Common myeloid progenitor, CD34-positive (primary cell): ENCODE measurements at regions of chr13 and their contacts with region 1.

Region 1: DNA sequence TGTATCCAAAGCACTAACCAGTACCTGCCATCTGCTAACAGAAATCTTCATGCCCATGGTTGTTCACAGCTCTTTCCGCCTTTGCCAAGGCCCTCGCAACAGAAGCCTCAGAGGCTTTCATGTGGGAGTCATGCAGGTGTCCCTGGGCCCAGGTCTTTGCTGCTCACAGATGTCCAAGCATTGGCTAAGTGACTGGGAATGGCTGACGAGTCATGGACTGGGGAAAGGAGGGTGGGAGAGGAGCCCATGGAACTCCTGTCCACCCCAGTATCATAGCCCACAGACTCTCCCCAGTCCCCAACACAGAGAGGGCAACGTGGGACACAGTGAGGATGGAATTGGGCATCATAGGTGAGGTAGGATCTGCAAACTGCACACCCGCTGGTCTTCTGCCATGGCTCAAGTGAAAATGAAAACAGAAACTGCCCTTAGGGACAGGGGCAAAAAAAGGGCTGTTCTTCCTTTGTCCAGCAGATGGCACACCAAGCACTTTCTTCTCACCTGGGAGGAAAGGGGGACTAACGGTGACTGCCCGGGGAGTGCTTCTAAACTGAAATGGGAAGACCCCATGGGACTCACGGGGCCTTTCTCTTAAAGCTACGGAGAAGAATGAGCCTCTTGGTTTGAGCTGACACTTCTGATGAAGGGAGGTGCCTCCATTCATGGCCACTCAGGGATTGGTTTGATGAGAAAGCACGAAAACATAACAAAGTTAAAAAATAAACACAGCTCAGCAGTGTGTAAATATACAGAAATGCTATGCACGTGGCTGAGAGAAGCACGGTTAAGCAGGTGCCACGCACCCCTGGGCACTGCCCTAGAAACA is 11.1 kb upstream of the DHRS12 start:
- DNase-seq: peak; percentile 72 to 89 (median 78)
- H3K4me3 ChIP-seq: peak overlapping the region in 4 of 7 experiments; percentile 2 to 63 (median 36)
- H3K27ac ChIP-seq: no peak overlapping the region
- H3K4me1 ChIP-seq: peaks cover 3 to 29% (median 25%) of the 10 kb centered on the region in 4 experiments
- H3K27me3 ChIP-seq: no peaks in the 10 kb centered on the region

Region 2: DNA sequence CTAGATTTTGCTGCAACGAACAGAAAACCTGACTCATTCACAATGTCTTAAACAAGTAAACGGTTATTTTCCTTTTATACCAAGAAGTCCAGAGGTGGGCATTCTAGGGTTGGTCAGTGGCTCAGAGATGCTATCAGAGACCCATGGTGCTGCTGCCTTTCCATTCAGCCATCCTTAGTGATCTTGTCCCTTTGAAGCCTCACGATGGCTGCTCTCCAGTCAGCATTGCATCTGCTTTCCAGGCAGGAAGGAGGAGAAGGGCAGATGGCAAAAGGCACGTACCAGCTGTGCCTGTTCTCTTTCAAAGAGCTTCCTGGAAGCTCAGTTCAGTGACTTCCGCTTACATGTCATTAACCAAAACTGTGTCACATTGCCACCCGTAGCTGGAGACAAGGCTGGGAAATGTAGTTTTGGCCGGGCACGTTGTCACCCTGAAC is 200.7 kb before region 1 on chr13:
- CTCF ChIA-PET with region 1: no interaction called
- POLR2A ChIA-PET with region 1: no interaction called
- DNase-seq: peak in 2 of 3 donors; percentile 62 to 77
- H3K4me3 ChIP-seq: peak overlapping the region in 3 of 7 experiments; percentile 33 to 49 (median 34)
- H3K27ac ChIP-seq: no peak overlapping the region
- H3K4me1 ChIP-seq: peaks cover 12 to 16% (median 14%) of the 10 kb centered on the region in 4 experiments
- H3K27me3 ChIP-seq: no peaks in the 10 kb centered on the region

Region 3: DNA sequence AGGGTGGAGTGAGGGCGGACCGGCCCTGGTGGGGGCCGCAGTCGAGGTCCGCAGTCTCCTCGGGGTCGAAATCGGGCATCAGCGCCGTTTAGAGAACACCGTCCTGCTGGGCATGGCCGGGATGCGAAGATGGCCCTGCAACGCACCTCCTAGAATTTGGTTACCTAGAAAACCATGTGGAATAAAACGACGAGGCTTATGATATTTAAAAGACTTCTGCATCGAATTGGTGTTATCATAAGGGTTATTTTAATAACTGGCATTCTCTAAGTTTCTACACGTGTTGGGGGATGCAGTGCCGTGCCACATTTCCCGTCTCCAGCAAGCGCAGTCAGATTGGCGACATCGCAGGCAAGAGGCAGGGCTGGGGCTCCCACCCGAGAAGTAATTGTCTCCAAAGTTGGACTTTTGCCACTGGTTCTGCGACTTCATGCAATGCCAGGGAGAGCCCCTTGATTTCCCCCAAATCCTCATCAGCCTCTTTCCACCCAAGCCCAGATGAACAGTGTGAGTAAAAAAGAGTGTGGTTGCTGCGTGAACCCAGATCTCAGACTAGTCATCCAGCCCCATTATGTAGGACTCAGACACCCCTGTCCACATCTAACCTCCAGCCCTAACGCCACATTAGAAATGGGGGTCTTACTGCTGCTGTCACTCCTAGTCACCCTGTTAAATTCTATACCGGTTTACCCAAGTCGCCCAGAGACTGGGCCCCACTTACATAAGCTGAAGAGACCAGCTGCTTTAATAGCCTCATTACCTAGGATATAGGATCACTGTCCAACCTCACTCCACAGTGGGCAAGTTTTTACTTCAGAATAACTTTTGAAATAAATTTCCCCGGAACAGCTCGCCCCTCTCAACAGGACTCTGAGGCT is 10.5 kb before region 1 on chr13:
- CTCF ChIA-PET with region 1: interaction called, 12 read pairs
- POLR2A ChIA-PET with region 1: no interaction called
- DNase-seq: peak in 1 of 3 donors; percentile 57
- H3K4me3 ChIP-seq: peak overlapping the region; percentile 46 to 82 (median 75)
- H3K27ac ChIP-seq: peak overlapping the region; percentile 82 to 94
- H3K4me1 ChIP-seq: peaks cover 13 to 54% (median 40%) of the 10 kb centered on the region in 4 experiments
- H3K27me3 ChIP-seq: no peaks in the 10 kb centered on the region

Region 4: GRCh38 chr13:51825165-51825592 is 10.1 kb after region 1 on chr13:
- CTCF ChIA-PET with region 1: interaction called, 58 read pairs
- POLR2A ChIA-PET with region 1: no interaction called
- DNase-seq: peak; percentile 40 to 89 (median 82)
- H3K4me3 ChIP-seq: peak overlapping the region in 1 of 7 experiments; percentile 2
- H3K27ac ChIP-seq: no peak overlapping the region
- H3K4me1 ChIP-seq: peaks cover 58 to 90% (median 76%) of the 10 kb centered on the region in 4 experiments
- H3K27me3 ChIP-seq: no peaks in the 10 kb centered on the region

Region 5: GRCh38 chr13:51832471-51833152 is 17.6 kb after region 1 on chr13:
- CTCF ChIA-PET with region 1: interaction called, 129 read pairs
- POLR2A ChIA-PET with region 1: no interaction called
- DNase-seq: peak; percentile 57 to 78 (median 77)
- H3K4me3 ChIP-seq: no peak overlapping the region
- H3K27ac ChIP-seq: no peak overlapping the region
- H3K4me1 ChIP-seq: peaks cover 16 to 57% (median 35%) of the 10 kb centered on the region in 4 experiments
- H3K27me3 ChIP-seq: no peaks in the 10 kb centered on the region

Region 6: GRCh38 chr13:51844862-51845573 is 30.0 kb after region 1 on chr13 and contains the start of gene TMEM272:
- CTCF ChIA-PET with region 1: interaction called, 129 read pairs
- POLR2A ChIA-PET with region 1: no interaction called
- DNase-seq: peak; percentile 37 to 50 (median 45)
- H3K4me3 ChIP-seq: peak within 1 kb of the TSS in 5 of 7 experiments; percentile 3 to 73 (median 58)
- H3K27ac ChIP-seq: no peak within 1 kb of the TSS
- H3K4me1 ChIP-seq: peaks cover 0 to 18% (median 5%) of the 10 kb centered on the region in 4 experiments
- H3K27me3 ChIP-seq: no peaks in the 10 kb centered on the region

Region 7: GRCh38 chr13:52128714-52129700 is 314.0 kb after region 1 on chr13 and contains the start of gene NEK5:
- CTCF ChIA-PET with region 1: interaction called, 24 read pairs
- POLR2A ChIA-PET with region 1: no interaction called
- DNase-seq: peak; percentile 41 to 67 (median 59)
- H3K4me3 ChIP-seq: peak within 1 kb of the TSS; percentile 66 to 94 (median 76)
- H3K27ac ChIP-seq: no peak within 1 kb of the TSS
- H3K4me1 ChIP-seq: peaks cover 2 to 18% (median 13%) of the 10 kb centered on the region in 4 experiments
- H3K27me3 ChIP-seq: no peaks in the 10 kb centered on the region